ENCODE measurements at regions of chr1 and their contacts with region 1.

Region 1: DNA sequence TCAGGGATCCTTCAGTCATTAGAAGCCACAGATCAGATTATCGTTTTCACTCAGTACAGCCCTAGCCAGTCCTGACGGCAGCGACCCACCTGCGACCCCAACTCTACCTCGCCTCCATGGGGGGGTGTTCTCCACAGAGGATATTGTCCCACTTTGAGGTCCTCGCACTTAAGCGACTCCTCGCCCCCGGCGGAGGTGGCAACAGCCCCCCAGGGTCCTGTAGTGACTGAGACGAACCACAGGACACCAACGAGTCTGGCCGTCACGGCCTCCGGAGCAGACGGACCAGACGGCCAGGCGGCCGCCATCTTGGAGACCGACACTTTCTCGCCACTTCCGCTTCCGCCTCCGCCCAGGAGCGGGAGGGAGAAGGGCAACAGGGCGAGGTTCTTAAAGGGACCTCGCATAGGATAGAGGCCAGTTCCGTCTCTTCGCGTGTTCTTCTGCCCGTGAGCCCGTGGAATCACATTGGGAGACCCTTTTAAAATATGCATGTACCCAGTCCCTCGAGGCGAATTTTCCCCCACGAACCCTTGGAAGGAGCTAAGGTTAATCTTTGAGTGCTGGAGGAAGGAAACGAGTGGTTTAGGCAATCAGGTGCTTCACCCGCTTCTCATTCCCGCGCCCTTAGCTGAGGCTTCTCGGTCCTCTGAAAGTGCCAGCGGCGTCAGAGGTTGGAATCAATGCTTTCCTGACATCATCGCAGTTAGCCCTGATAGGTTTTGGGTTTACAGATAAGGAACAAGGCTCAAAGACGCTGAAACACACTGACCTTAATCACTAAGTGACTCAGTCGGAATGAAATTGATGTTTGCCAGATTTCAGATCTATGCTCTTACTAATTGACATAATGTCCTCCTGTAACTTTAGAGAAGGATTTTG is at the start of gene TM2D1:
- DNase-seq: peak; percentile 65 to 92 (median 78)
- ATAC-seq: peak; percentile 91
- H3K4me3 ChIP-seq: peak within 1 kb of the TSS; percentile 93
- H3K4me3 Mint-ChIP-seq: peak within 1 kb of the TSS; percentile 97
- H3K27ac ChIP-seq: peak within 1 kb of the TSS; percentile 87 to 91
- H3K27ac Mint-ChIP-seq: peak within 1 kb of the TSS; percentile 97
- H3K4me1 ChIP-seq: peaks cover 17% of the 10 kb centered on the region
- H3K4me1 Mint-ChIP-seq: peaks cover 40% of the 10 kb centered on the region
- H3K27me3 ChIP-seq: no peaks in the 10 kb centered on the region
- H3K27me3 Mint-ChIP-seq: no peaks in the 10 kb centered on the region
- CTCF ChIP-seq: no peak
- total RNA-seq, gene TM2D1: 12.0 to 13.7 TPM

Region 2: DNA sequence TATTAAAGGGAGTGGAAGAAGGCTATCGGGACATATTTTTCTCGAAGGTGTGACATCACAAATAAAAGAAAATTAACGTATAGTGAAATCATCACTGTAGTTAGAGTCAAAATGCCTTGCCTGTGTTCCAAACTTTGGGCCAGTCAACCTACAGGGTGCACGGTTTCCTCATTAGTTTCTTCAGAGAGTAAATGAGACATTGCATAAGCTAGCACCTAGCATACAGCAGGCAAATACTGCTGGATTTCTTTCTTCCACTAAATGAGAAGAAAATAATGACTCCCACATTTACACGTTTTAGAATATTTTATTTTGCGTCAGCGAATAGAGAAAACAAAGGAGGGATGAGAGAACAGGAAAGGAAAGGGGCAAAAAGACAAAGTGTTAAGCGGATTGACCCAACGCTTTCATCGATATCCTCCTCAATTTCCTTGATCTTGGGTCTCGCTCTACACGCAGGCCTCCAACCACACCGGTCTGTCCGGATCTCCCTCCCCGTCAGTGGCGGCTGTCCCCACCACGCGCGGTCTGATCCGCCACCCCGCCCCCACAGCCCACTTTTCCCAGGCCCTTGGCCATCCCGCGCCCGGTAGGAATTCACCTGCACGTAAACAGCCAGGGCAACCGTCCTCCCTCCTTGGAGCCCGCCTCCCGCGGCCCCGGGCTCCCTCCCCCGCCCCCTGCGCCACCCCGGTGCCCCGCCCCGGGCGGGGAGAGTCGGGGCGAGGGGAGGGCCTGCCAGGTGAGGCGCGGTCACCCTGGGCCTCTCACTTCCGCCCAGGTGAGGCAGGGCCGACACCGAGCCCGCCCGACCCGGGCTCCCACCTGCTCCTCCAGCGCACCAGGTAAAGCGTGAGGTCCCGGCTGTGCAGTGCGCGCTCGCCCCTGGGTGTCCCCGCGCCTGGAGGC is 16.9 kb after region 1 on chr1 and contains the start of gene PATJ:
- CTCF ChIA-PET with region 1: no interaction called
- POLR2A ChIA-PET with region 1: interaction called, 7 read pairs
- intact Hi-C with region 1: loop called (anchors 1 to 2 kb)
- DNase-seq: peak; percentile 40 to 87 (median 66)
- ATAC-seq: peak; percentile 91
- H3K4me3 ChIP-seq: peak within 1 kb of the TSS; percentile 78
- H3K4me3 Mint-ChIP-seq: peak within 1 kb of the TSS; percentile 97
- H3K27ac ChIP-seq: peak within 1 kb of the TSS; percentile 56 to 62
- H3K27ac Mint-ChIP-seq: peak within 1 kb of the TSS; percentile 94
- H3K4me1 ChIP-seq: peaks cover 23% of the 10 kb centered on the region
- H3K4me1 Mint-ChIP-seq: peaks cover 31% of the 10 kb centered on the region
- H3K27me3 ChIP-seq: no peaks in the 10 kb centered on the region
- H3K27me3 Mint-ChIP-seq: no peaks in the 10 kb centered on the region
- CTCF ChIP-seq: no peak
- total RNA-seq, gene PATJ: 50.4 to 54.1 TPM